ENCODE measurements at regions of chr17 and their contacts with region 1.

Region 1: GRCh38 chr17:48101012-48101720 is at the start of gene CBX1:
- DNase-seq: peak; percentile 97
- ATAC-seq: peak; percentile 97
- H3K4me3 Mint-ChIP-seq: peak within 1 kb of the TSS; percentile 97
- H3K27ac Mint-ChIP-seq: peak within 1 kb of the TSS; percentile 94
- H3K4me1 Mint-ChIP-seq: peaks cover 41% of the 10 kb centered on the region
- H3K27me3 Mint-ChIP-seq: no peaks in the 10 kb centered on the region
- total RNA-seq, gene CBX1: 55.1 to 56.0 TPM

Region 2: DNA sequence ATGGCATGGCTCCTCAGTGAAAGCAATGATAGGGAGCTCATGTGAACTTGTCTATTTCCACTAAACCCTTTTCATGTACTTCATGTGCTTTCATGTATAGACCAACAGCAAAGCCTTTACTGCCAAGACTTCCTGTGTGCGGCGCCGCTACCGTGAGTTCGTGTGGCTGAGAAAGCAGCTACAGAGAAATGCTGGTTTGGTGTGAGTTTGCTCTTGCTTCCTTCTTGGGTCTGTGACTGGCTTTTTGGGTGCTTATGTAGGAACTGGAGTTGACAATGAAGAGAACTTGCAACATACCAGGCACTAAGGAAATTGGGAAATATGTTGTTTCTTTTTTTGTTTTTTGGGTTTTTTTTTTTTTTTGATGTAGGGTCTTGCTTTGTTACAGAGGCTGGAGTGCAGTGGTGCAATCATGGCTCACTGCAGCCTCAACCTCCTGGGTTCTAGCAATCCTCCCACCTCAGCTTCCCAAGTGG is 12.1 kb after region 1 on chr17:
- POLR2A ChIA-PET with region 1: interaction called, 45 read pairs
- DNase-seq: peak; percentile 67
- ATAC-seq: peak; percentile 95
- H3K4me3 Mint-ChIP-seq: peak overlapping the region; percentile 44
- H3K27ac Mint-ChIP-seq: peak overlapping the region; percentile 86
- H3K4me1 Mint-ChIP-seq: peaks cover 40% of the 10 kb centered on the region
- H3K27me3 Mint-ChIP-seq: no peaks in the 10 kb centered on the region